ENCODE measurements at regions of chr3 and their contacts with region 1.

Region 1: DNA sequence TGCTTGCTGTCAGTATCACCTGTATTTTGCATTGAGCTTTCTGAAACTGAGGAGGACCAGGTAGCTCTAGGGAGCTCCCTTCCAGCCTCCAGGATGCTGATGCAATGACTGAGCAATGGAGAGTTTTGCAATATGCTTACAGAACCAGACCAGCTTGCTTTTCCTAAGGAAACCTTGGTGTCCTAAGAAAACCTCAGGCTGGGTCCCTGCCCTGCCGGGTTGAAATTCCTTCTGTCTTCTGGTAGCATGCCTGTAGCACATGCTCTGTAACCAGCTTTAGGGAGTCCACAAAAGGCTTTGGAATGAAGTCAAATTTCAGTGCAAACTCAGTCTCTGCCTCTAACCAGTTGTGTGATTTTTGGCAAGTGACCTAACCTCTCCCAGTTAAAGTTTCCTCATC is 65.8 kb upstream of the GSK3B start:
- DNase-seq: peak; percentile 99
- H3K4me3 Mint-ChIP-seq: no peak overlapping the region
- H3K27ac Mint-ChIP-seq: peak overlapping the region; percentile 96
- H3K4me1 Mint-ChIP-seq: peaks cover 32% of the 10 kb centered on the region
- H3K27me3 Mint-ChIP-seq: no peaks in the 10 kb centered on the region
- CTCF ChIP-seq: no peak

Region 2: DNA sequence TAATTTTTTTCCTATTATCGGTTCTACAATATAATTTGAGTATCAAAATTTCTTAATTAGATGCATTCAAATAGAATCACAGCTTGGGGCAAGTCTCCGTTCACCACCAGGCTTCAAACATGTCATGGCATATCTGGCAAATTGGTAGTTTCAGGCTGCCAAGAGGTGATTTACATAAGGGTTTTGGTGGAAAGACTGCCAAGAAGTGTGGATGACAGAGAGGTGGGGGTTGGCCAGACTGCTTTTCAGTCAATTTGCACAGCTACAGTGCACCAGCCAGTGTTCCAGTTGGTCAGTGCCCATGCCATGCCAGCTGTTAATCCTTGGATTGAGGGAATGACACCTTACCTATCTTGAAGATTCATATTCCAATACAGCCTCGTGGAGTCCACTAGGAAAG is 57.4 kb before region 1 on chr3:
- CTCF ChIA-PET with region 1: no interaction called
- POLR2A ChIA-PET with region 1: interaction called, 15 read pairs
- intact Hi-C with region 1: no loop called
- DNase-seq: peak; percentile 88
- H3K4me3 Mint-ChIP-seq: no peak overlapping the region
- H3K27ac Mint-ChIP-seq: peak overlapping the region; percentile 82
- H3K4me1 Mint-ChIP-seq: peaks cover 23% of the 10 kb centered on the region
- H3K27me3 Mint-ChIP-seq: no peaks in the 10 kb centered on the region
- CTCF ChIP-seq: no peak

Region 3: GRCh38 chr3:120113128-120114116 is 46.6 kb before region 1 on chr3:
- CTCF ChIA-PET with region 1: interaction called, 3 read pairs
- POLR2A ChIA-PET with region 1: interaction called, 54 read pairs
- intact Hi-C with region 1: no loop called
- DNase-seq: peak; percentile 91
- H3K4me3 Mint-ChIP-seq: no peak overlapping the region
- H3K27ac Mint-ChIP-seq: peak overlapping the region; percentile 73
- H3K4me1 Mint-ChIP-seq: peaks cover 51% of the 10 kb centered on the region
- H3K27me3 Mint-ChIP-seq: no peaks in the 10 kb centered on the region
- CTCF ChIP-seq: no peak

Region 4: DNA sequence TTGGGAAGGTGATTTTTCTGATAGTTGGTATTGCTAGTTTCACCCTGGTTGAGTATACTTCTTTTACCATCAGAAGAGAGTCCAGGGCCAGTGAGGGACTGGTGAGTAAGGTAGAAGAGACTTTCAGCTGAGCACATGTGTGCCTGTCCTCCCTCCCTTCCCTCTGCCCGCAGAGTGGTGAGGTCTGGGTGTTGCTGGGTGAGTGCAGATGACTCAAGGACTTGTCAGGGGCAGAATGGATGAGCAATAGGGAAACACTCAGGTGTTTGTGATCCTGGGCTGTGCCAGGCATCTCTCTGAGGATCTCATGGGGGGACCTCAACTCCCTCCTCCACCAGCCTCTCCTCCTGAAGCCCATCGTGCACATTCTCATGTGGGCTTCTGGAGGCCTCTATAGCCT is 10.2 kb after region 1 on chr3:
- CTCF ChIA-PET with region 1: interaction called, 6 read pairs
- POLR2A ChIA-PET with region 1: interaction called, 46 read pairs
- intact Hi-C with region 1: loop called (anchors 1 kb)
- DNase-seq: peak; percentile 93
- H3K4me3 Mint-ChIP-seq: peak overlapping the region; percentile 13
- H3K27ac Mint-ChIP-seq: peak overlapping the region; percentile 75
- H3K4me1 Mint-ChIP-seq: peaks cover 33% of the 10 kb centered on the region
- H3K27me3 Mint-ChIP-seq: no peaks in the 10 kb centered on the region
- CTCF ChIP-seq: no peak

Region 5: DNA sequence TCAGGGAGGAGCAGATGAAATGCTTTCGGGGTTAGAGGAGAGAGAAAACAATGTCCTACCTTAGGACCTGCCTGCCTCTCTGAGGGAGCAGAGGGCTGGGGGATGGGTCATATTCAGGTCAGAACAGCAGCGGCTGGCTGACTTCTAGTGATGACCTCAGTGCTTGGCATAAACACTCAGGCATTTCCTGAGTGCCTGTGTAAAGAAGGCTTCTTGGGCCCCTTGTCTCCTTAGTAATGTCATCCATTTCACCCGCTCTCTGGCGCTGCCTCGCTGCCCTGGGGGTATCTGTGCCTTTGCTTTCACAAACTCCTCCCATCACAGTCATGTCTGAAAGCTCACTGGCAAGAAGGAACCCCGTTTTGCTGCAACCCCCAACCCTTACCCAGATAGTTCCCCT is 17.1 kb after region 1 on chr3:
- CTCF ChIA-PET with region 1: interaction called, 5 read pairs
- POLR2A ChIA-PET with region 1: interaction called, 22 read pairs
- intact Hi-C with region 1: no loop called
- DNase-seq: peak; percentile 93
- H3K4me3 Mint-ChIP-seq: peak overlapping the region; percentile 65
- H3K27ac Mint-ChIP-seq: peak overlapping the region; percentile 96
- H3K4me1 Mint-ChIP-seq: peaks cover 34% of the 10 kb centered on the region
- H3K27me3 Mint-ChIP-seq: no peaks in the 10 kb centered on the region
- CTCF ChIP-seq: no peak

Region 6: DNA sequence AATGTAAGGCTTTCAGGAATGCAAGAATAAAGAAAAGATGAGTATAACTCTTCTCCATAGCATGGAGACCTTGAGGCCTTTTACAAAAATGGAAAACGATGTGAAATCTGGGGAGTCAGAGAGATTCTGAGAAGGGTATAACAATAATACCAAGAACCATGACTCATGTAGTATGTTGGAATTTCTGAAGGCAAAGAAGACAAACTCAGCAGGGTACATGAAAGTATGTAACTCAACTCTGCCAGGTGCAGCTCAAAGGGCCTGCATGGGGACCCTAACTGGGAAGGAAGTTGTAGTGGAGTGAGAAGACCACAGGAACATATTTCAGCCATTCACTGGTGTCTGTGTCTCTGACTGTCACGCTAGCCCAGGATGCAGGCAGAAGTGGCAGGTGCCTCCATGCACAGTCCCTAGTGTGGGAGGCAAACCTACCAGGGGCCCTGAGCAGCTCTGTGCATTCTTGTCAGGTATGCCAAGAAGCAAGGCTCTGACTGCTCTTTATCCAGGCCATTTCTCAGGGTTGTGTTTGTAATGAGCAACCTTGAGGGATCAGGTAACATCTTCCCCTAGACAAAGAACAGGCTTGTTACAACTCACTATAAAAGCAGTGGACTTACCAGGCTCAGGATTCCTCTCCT is 67.8 kb after region 1 on chr3:
- CTCF ChIA-PET with region 1: no interaction called
- POLR2A ChIA-PET with region 1: no interaction called
- intact Hi-C with region 1: no loop called
- DNase-seq: no peak
- H3K4me3 Mint-ChIP-seq: no peak overlapping the region
- H3K27ac Mint-ChIP-seq: no peak overlapping the region
- H3K4me1 Mint-ChIP-seq: peaks cover 9% of the 10 kb centered on the region
- H3K27me3 Mint-ChIP-seq: no peaks in the 10 kb centered on the region
- CTCF ChIP-seq: no peak